WTC11 (cell line): ENCODE measurements at regions of chr2 and their contacts with region 1.

Region 1: GRCh38 chr2:217785544-217786045 is 217.2 kb downstream of the TNS1 start:
- DNase-seq: peak; percentile 87
- ATAC-seq: peak; percentile 87
- H3K4me3 Mint-ChIP-seq: no peak overlapping the region
- H3K27ac Mint-ChIP-seq: no peak overlapping the region
- H3K4me1 Mint-ChIP-seq: peaks cover 13% of the 10 kb centered on the region
- H3K27me3 Mint-ChIP-seq: peaks cover 15% of the 10 kb centered on the region
- CTCF ChIP-seq: peak; percentile 97

Region 2: GRCh38 chr2:217798743-217799562 is 13.4 kb after region 1 on chr2:
- CTCF ChIA-PET with region 1: interaction called, 17 read pairs
- POLR2A ChIA-PET with region 1: no interaction called
- DNase-seq: no peak
- ATAC-seq: no peak
- H3K4me3 Mint-ChIP-seq: no peak overlapping the region
- H3K27ac Mint-ChIP-seq: no peak overlapping the region
- H3K4me1 Mint-ChIP-seq: peaks cover 3% of the 10 kb centered on the region
- H3K27me3 Mint-ChIP-seq: no peaks in the 10 kb centered on the region
- CTCF ChIP-seq: no peak

Region 3: DNA sequence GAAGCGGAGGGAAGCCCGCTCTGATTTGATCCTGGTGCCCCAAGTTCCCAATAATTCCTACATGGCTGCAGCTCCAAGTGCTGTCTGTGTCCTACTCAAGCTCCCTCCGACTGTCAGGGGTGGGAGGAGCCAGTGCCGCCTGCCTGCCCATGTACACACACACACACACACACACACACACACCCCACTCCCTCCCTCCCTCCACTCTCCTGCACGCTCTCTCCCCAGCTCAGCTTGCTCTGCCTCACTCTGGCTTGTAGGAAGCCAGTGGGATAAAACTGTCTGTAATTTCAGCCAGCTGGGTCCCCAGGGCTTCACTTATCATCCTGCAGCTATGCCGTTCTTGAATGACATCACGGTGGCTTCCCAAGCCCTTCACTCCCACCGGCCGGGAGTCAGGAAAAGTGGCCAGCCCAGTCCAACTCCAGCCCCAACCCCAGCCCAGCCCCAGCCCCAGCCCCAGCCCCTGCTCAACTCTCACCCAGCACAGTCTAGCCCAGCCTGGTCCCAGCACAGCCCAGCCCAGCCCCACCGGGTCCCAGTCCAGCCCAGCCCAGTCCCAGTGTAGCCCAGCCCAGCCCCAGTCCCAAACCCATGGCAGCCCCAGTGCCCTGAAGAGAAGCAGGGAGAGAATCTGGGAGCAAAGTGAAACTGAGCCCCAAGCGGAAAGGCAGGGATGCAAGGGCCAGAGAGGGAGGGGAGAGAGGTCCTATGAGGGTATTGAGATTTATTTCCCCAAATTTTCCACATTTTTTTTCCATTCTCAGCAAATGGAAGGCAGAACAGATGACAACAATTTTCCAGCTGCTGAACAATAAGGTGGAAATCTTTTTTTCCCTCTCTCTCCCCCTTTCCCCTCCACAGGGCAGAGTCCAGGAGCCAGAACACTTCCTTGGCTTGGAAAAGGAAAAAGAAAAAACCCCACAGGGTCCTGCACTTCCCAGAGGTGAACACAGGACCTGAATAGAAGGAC is 73.2 kb after region 1 on chr2:
- CTCF ChIA-PET with region 1: interaction called, 21 read pairs
- POLR2A ChIA-PET with region 1: no interaction called
- DNase-seq: no peak
- ATAC-seq: peak; percentile 25
- H3K4me3 Mint-ChIP-seq: no peak overlapping the region
- H3K27ac Mint-ChIP-seq: no peak overlapping the region
- H3K4me1 Mint-ChIP-seq: peaks cover 33% of the 10 kb centered on the region
- H3K27me3 Mint-ChIP-seq: no peaks in the 10 kb centered on the region
- CTCF ChIP-seq: no peak

Region 4: GRCh38 chr2:217899231-217900009 is 113.8 kb after region 1 on chr2:
- CTCF ChIA-PET with region 1: interaction called, 40 read pairs
- POLR2A ChIA-PET with region 1: no interaction called
- DNase-seq: peak; percentile 89
- ATAC-seq: peak; percentile 97
- H3K4me3 Mint-ChIP-seq: no peak overlapping the region
- H3K27ac Mint-ChIP-seq: no peak overlapping the region
- H3K4me1 Mint-ChIP-seq: peaks cover 19% of the 10 kb centered on the region; the same call in 1 of the 2 replicates
- H3K27me3 Mint-ChIP-seq: no peaks in the 10 kb centered on the region
- CTCF ChIP-seq: peak; percentile 75

Region 5: DNA sequence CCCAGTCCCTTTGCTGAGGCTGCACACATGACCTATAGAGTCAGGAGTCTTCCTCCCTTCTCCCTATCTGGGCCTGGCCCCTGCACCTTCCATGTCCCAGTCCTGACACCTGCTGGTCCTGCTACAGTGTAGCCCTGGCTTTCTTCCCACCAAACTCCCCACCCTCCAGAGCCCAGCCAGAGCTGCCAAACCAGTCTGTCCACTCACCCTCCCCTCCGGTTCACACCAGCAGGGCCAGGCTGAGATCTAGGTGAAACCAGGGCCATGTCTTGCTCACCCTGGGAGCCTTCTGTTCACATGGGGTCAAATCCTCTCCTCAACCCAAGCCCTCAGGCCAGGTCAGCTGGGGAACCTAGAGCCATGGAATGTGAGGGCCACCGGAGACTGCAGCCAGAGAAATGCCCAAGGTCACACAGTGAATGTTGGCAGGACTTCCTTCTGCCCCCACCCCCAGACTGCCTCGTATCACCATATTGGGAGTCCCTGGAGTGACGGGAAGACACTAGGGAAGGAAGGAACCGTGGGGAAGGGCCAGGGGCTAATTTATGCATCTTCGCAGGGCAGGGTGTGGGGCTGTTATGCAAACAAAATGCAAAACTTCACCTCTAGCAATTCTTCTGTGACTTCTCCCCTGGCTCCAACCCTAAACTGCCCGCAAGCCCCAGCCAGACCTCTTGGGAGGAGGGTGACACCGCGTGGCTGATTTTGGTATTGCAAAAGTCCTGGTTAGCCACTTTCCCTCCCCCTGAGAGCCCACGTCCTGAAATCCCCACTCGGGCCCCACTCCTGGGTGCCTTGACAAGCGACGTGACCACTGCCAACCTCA is 202.6 kb after region 1 on chr2:
- CTCF ChIA-PET with region 1: interaction called, 158 read pairs
- POLR2A ChIA-PET with region 1: no interaction called
- DNase-seq: peak; percentile 92
- ATAC-seq: peak; percentile 94
- H3K4me3 Mint-ChIP-seq: peak overlapping the region; percentile 65
- H3K27ac Mint-ChIP-seq: peak overlapping the region; percentile 98
- H3K4me1 Mint-ChIP-seq: peaks cover 17% of the 10 kb centered on the region
- H3K27me3 Mint-ChIP-seq: no peaks in the 10 kb centered on the region
- CTCF ChIP-seq: peak; percentile 89

Region 6: DNA sequence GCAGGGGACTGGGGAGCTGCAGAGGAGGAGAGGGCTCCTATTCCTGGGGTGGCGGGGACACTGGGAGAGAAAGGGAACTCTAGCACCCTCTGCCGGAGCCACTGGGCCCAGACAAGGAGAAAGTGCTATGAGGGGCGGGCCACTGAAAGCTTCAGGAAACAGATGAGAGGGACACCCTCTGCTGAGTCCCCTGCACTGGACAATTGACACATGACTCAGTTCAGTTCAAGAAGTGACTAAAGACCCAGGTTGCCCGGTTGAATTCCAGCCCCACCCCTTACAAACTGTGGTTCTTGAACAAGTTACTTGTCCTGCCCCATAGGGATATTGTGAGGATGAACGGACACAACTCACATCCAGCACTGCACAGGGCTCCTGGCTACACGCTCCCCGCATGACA is 288.4 kb after region 1 on chr2:
- CTCF ChIA-PET with region 1: interaction called, 23 read pairs
- POLR2A ChIA-PET with region 1: no interaction called
- DNase-seq: peak; percentile 77
- ATAC-seq: peak; percentile 85
- H3K4me3 Mint-ChIP-seq: no peak overlapping the region
- H3K27ac Mint-ChIP-seq: no peak overlapping the region
- H3K4me1 Mint-ChIP-seq: peaks cover 14% of the 10 kb centered on the region
- H3K27me3 Mint-ChIP-seq: no peaks in the 10 kb centered on the region; the same call in 1 of the 2 replicates
- CTCF ChIP-seq: peak; percentile 32; the same call in 1 of the 2 replicates